GM10248 (cell line): ENCODE measurements at regions of chr4 and their contacts with region 1.

Region 1: GRCh38 chr4:121484633-121485032 is 103.8 kb upstream of the QRFPR start:
- DNase-seq: peak; percentile 43
- CTCF ChIP-seq: peak; percentile 70

Region 2: DNA sequence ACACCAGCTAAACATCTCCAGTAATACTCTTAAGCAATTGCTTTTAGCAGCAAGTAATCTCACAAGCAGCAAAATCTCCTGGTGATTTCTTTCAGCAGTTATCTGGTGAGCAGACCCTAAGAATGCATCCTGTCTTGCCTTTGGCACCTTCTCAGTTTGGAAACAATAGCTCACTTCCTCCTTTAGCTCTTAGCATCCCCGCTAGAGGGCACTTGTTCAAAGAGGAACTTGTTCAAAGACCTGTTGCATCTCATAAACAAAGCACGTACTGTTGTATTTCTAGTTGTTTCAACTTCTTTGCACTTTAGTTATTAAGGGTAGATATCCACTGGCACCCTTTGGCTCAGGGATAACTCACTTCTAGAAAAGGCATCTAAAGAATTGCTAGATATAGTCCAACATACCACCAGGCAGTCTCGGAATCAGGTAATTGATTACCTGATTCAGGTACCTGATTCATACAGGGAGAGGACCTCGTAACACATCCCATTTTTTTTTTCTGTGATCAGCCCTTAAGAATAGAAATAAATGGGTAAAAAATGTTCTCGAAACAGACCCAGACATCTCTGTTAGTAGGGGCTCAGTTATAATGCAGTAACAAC is 21.9 kb before region 1 on chr4:
- CTCF ChIA-PET with region 1: interaction called, 12 read pairs
- POLR2A ChIA-PET with region 1: no interaction called
- DNase-seq: peak; percentile 26
- CTCF ChIP-seq: peak; percentile 69